ENCODE measurements at regions of chr3 and their contacts with region 1.

Region 1: DNA sequence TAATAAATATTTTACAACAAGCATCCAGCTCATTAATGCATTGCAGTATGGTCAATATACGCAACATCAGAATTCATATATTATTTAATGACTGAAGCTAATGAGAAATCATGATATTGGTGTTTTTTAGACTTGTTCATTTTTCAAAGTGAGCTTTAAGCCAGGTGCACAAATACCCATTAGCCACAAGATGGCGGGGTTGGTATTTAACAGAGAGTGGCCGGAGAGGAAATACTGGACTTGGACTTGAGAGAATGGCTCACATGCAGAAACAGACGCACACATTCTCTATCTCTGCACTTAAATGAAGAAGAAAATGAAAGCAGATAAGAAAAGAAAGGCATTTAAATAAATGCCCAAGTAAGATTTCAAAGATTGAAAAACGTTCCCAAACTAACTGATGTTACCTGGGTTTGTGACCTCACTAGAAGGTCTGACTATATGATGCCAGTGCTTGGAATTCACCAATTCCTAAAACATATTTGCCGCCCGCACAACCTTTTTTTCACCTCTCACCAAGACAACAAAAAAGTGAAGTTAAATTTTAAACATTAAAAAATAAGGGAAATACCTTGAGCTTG is 21.2 kb upstream of the CRBN start:
- DNase-seq: peak in 1 of 2 donors; percentile 55
- ATAC-seq: peak; percentile 80
- H3K4me3 ChIP-seq: no peak overlapping the region
- H3K27ac ChIP-seq: no peak overlapping the region
- H3K4me1 ChIP-seq: peaks cover 0 to 3% of the 10 kb centered on the region in 2 donors
- H3K27me3 ChIP-seq: no peaks in the 10 kb centered on the region

Region 2: DNA sequence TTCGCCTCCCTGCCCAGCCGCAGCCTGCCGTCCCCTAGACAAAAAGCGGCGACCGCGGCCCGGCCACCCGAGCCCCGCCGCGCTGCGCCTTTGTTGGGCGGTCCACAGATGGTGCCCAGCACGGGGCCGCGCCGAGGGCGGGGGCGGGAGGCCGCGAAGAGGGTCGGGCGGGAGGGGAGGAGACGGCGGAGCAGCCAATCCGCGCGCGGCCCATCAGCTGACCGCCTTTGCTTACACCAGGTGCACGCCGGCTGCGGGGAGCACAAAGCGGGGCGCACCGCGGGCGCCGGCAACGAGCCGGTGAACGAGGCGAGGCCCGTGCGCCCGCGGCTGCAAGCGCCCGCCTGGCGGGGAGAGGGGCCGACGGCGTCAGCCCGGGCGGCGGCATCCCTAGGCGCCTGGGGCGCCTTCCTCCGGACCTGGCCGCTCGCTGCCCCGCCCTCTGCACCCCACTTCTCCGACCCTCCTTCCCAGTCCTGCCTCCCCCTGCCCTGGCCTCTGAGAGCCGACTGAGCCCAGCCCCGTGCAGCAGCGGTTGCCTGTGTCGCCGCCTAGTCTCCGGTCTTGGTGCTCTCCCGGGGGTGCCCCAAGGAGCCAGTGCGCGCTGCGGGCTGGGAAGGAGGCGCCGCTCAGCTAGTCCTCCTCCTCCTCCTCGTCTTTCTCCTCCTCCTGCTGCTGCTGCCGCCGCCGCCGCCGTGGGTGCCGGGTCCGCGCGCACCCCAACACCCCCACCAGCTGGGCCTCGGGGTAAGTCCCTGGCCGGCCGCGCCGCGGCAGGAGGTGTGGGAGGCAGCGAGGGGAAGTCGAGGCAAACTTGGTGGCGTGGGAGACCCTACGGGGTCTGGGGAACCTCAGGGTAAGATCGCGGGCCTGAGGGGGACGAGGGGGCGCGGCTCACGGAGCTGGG is 598.7 kb after region 1 on chr3 and contains the start of gene LRRN1:
- intact Hi-C with region 1: loop called (anchors 5 kb)
- DNase-seq: peak; percentile 67 to 86
- ATAC-seq: peak; percentile 77
- H3K4me3 ChIP-seq: peak within 1 kb of the TSS; percentile 42 to 48
- H3K27ac ChIP-seq: peak within 1 kb of the TSS in 1 of 2 donors; percentile 4
- H3K4me1 ChIP-seq: no peaks in the 10 kb centered on the region
- H3K27me3 ChIP-seq: no peaks in the 10 kb centered on the region
- total RNA-seq, gene LRRN1: 4.8 to 6.6 TPM

Region 3: DNA sequence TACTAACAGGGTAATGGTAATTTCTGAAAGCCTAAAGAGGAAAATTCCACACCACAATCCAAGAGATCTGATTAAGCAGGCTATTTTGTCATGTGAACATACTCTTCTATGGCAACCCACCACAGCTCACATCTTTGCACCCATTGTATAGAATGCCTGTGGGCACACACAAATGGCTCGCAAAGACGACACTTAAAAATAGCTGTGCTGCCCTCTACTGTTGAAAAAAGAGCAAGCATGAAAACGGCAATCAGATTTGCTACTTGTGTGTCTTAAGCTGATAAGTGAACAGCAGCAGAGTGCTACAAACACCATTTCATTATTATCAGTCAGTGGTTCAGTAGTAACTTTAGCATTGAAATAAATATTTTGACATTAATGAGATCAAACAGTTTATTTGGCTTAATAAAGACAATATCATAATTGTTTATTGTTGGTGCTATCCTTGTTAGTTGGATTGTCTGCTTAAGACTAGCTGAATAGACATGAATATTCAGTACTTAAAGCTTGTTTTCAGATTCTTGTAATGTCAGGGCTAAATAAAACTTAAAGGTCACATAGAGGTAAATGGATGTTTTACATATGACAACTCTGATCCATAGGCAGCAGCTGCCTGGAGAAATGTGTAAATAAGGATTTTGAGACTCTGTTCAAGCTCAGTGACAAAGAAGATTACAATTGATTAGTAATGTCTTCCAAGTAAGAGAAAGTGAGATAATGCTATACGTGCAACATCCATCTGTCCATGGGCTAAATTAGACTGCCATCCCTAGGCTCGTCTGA is 797.6 kb after region 1 on chr3:
- intact Hi-C with region 1: loop called in 1 of 2 experiments (anchors 5 kb)
- DNase-seq: no peak
- ATAC-seq: no peak
- H3K4me3 ChIP-seq: no peak overlapping the region
- H3K27ac ChIP-seq: no peak overlapping the region
- H3K4me1 ChIP-seq: no peaks in the 10 kb centered on the region
- H3K27me3 ChIP-seq: no peaks in the 10 kb centered on the region

Region 4: DNA sequence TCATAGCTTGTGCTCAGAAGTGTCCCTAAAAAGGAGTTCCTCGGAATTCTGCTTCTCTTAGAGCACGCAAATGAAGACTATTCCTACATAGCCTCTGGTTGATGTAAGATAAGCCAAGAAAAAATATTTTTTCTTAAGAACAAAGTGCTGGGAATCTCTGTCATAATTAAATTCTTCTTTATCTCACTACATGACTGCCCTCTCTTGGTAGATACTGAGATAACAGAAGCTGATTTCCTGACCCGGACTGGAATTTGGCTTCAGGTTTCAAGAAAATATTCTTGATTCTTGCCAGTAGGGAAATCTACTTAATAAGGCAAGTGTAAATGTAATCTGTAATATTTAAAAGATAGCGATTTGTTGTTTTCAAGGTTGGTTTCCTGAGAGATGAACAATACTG is 1071.1 kb after region 1 on chr3:
- intact Hi-C with region 1: loop called in 1 of 2 experiments (anchors 5 kb)
- DNase-seq: no peak
- ATAC-seq: peak; percentile 70
- H3K4me3 ChIP-seq: no peak overlapping the region
- H3K27ac ChIP-seq: no peak overlapping the region
- H3K4me1 ChIP-seq: no peaks in the 10 kb centered on the region
- H3K27me3 ChIP-seq: no peaks in the 10 kb centered on the region

Region 5: DNA sequence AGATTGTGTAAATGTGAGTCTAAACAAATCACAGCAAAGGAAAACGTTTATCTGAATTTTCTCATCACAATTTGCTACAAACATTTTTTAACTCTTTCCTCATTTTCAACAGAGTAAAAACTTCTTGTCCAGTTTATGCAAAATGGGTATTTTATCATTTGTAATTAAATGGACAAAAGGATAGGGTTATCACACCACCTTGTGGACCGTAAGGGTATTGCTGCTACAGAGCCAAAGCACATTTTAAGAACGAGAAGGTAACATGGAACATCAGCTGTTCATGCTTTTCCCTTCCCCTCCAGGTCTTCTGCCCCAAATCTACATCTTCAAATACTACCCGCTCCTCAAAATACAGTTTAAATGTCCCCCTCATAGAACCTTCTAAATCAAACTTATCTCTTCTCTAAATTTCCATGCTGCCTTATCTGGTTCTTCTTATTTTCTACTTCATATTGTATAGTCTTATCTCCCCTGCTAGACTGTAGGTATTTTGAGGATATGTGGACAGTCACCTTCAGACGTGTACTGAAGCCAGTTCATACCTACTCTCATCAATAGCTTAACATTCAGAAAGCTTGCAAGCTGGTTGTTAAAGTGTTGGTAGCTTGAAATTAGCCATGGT is 1089.7 kb after region 1 on chr3:
- intact Hi-C with region 1: loop called (anchors 2 to 5 kb)
- DNase-seq: no peak
- ATAC-seq: peak; percentile 83
- H3K4me3 ChIP-seq: no peak overlapping the region
- H3K27ac ChIP-seq: no peak overlapping the region
- H3K4me1 ChIP-seq: no peaks in the 10 kb centered on the region
- H3K27me3 ChIP-seq: no peaks in the 10 kb centered on the region

Measured in aorta (tissue), 5 donors.